ENCODE measurements at regions of chr13 and their contacts with region 1.

Region 1: DNA sequence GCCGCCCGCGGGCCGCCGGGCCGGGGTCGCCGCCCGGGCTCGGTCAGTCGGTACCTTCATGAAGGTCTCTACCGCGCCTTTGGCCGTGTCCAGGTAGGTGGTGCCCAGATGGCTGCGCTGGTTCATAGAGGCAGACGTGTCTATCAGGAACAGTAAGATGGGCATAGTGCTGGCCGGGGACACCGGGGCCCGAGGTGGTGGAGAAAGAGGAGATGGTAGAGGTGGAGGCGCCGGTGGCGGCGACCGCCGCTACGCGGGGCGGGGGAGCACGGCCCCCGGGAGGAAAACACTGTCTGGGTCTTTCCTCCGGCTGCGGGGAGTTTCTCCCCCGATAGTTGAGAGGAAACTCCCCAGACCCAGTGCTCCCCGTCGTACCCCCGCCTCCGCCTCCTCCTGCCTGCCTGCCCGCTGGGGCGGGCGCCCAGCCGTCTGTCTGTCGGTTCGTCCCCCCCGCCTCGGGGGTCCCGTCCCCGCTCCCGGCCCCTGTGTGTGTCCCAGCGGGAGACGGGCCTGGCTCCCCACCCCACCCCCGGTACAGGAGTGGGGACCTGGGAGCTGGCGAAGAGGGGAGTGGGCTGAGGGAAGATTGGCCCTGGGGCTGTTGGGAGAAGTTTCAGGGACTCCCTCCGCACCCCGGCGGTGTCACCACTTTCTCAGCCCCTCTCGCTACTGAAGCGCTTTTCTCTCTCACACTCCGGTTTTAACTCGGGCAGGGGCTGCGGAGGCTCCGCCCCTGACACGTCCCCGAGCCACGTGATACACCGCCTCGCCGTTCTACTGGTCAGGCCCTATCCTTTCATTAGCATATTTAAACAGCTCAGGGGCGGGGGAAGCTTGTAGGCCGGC is at the start of gene INTS6:
- DNase-seq: peak; percentile 99 to 100 (median 100)
- H3K4me3 ChIP-seq: peak within 1 kb of the TSS; percentile 79 to 89 (median 85)
- H3K27ac ChIP-seq: peak within 1 kb of the TSS; percentile 98
- H3K4me1 ChIP-seq: peaks cover 4 to 10% (median 6%) of the 10 kb centered on the region in 3 donors
- H3K27me3 ChIP-seq: no peaks in the 10 kb centered on the region
- CTCF ChIP-seq: no peak
- total RNA-seq, gene INTS6: 31.0 TPM

Region 2: DNA sequence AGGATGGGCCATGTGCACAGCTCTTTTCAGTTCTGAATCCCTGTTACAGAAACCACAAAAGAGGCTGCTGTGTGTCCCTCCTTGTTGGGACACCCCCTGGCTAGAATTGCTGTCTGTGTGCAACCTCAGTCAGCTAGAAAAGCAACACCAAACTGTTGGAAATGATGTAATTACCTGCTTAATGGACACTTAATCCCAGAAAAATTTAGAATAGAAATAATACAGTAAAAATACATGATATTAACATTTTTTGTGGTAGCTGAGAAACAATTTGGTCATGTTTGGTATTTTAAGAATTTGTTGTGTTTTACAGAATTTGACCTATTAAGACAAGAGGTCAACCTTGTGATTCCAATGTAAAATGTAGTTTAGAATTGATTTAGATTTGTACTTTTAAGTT is 183.5 kb before region 1 on chr13:
- intact Hi-C with region 1: no loop called
- DNase-seq: no peak
- H3K4me3 ChIP-seq: no peak overlapping the region
- H3K27ac ChIP-seq: no peak overlapping the region
- H3K4me1 ChIP-seq: peaks cover 0 to 3% (median 0%) of the 10 kb centered on the region in 3 donors
- H3K27me3 ChIP-seq: no peaks in the 10 kb centered on the region
- CTCF ChIP-seq: no peak

Region 3: GRCh38 chr13:51583875-51584730 is 131.5 kb after region 1 on chr13 and contains the start of gene WDFY2:
- intact Hi-C with region 1: loop called (anchors 10 kb)
- DNase-seq: peak; percentile 100
- H3K4me3 ChIP-seq: peak within 1 kb of the TSS; percentile 78 to 93 (median 81)
- H3K27ac ChIP-seq: peak within 1 kb of the TSS; percentile 77 to 80
- H3K4me1 ChIP-seq: peaks cover 0 to 2% (median 2%) of the 10 kb centered on the region in 3 donors
- H3K27me3 ChIP-seq: no peaks in the 10 kb centered on the region
- CTCF ChIP-seq: peak; percentile 23
- total RNA-seq, gene WDFY2: 13.0 TPM

Measured in kidney (tissue), 22 donors.